Thyroid gland (tissue), 4 donors: ENCODE measurements at regions of chr3 and their contacts with region 1.

Region 1: DNA sequence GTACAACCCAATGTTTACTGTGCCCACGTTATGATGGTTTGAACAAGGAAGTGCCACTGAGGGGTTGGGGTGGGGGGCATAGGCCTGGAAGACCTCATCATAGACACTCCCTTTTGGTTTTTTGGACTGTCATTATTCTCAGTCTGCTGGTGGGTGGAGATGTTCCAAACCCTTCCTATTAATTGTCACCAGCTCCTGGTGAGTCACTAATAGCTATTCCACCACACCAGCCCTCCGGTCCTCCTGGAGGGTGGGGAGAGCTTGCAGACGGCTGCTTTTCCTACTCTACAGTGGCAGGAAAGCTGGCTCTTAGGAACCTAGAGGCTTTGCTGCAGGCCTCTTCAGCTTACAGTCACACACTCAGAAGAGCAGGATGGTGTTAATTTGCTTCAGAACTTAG is 9.0 kb upstream of the COPG1 start:
- DNase-seq: no peak
- H3K4me3 ChIP-seq: no peak overlapping the region
- H3K27ac ChIP-seq: no peak overlapping the region
- H3K4me1 ChIP-seq: peaks cover 0 to 4% of the 10 kb centered on the region in 2 donors
- H3K27me3 ChIP-seq: no peaks in the 10 kb centered on the region
- CTCF ChIP-seq: no peak
- POLR2A ChIP-seq: no peak

Region 2: GRCh38 chr3:128969993-128970739 is 270.3 kb before region 1 on chr3:
- intact Hi-C with region 1: loop called (anchors 5 kb)
- DNase-seq: peak; percentile 30 to 35
- H3K4me3 ChIP-seq: no peak overlapping the region
- H3K27ac ChIP-seq: no peak overlapping the region
- H3K4me1 ChIP-seq: peaks cover 0 to 7% of the 10 kb centered on the region in 2 donors
- H3K27me3 ChIP-seq: no peaks in the 10 kb centered on the region
- CTCF ChIP-seq: peak; percentile 75 to 94 (median 82)
- POLR2A ChIP-seq: no peak